Endothelial cell of umbilical vein (primary cell): ENCODE measurements at regions of chr15 and their contacts with region 1.

Region 1: DNA sequence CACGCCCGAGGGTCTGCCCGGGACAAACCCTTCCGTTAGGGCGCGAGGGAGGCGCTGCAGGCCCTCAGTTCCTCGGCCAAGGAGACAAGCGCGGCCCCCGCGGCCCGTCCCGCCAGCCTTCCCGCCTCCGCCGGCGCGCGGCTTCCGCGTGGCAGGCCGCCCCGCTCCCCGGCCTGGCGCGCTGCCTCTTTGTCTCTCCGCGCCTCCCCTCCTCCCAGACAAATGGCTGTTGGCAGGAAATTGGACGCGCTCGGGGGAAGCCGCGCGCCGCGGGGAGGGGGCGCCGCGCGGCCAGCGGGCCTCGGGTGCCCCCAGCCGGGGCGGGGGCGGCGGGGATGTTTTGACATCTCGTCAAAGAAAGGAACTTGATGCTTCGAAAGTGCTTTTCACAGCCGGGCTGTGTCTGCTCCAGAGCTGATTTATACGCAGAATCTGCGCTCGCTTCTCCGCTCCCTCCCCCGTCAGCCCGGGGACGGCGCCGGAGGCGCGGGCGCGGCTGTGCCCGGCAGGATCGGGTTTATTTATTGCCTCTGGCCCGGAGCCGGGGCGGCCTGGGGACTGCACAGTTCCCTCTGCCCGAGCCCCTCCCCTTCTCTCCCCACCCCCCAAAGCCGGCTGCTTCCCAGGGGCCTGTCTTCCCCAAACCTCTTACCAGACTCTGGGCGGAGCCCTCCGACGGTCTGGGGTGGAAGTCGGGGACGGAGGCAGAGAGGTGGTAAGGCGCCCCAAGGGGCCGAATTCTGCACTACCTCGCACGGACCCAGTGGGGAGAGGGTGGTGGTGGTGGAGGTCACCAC is 20.7 kb downstream of the SHF start:
- DNase-seq: peak; percentile 72
- H3K4me3 ChIP-seq: peak overlapping the region; percentile 54 to 76 (median 61)
- H3K27ac ChIP-seq: peak overlapping the region; percentile 79
- H3K4me1 ChIP-seq: peaks cover 3% of the 10 kb centered on the region
- H3K27me3 ChIP-seq: no peaks in the 10 kb centered on the region
- CTCF ChIP-seq: peak; percentile 52 to 74
- POLR2A ChIP-seq: no peak

Region 2: DNA sequence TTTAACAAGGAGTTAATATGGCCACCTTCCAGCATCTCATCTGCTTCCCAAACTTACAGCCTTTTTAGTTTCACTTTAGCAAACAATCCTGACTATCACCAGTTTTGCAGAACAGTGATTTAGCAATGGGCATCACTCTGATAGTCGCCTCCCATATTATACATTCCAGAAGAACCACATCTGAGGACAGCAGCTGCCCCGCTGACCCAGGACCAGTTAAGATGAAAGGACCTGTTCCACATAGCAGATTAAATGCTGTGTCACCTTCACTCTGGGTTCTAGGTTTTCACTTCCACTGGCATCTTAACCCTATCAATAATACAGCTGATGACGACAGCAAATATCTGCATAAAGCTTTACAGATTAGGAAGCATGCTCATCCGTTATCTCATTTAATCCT is 330.9 kb before region 1 on chr15:
- CTCF ChIA-PET with region 1: no interaction called
- POLR2A ChIA-PET with region 1: no interaction called
- dilution Hi-C with region 1: no loop called
- intact Hi-C with region 1: no loop called
- DNase-seq: no peak
- H3K4me3 ChIP-seq: no peak overlapping the region
- H3K27ac ChIP-seq: no peak overlapping the region
- H3K4me1 ChIP-seq: peaks cover 13% of the 10 kb centered on the region
- H3K27me3 ChIP-seq: no peaks in the 10 kb centered on the region
- CTCF ChIP-seq: no peak
- POLR2A ChIP-seq: no peak

Region 3: GRCh38 chr15:45118131-45118588 is 48.9 kb before region 1 on chr15:
- CTCF ChIA-PET with region 1: interaction called, 12 read pairs
- POLR2A ChIA-PET with region 1: no interaction called
- dilution Hi-C with region 1: no loop called
- intact Hi-C with region 1: no loop called
- DNase-seq: peak; percentile 92
- H3K4me3 ChIP-seq: peak overlapping the region in 1 of 3 experiments; percentile 22
- H3K27ac ChIP-seq: no peak overlapping the region
- H3K4me1 ChIP-seq: peaks cover 10% of the 10 kb centered on the region
- H3K27me3 ChIP-seq: peaks cover 46 to 47% of the 10 kb centered on the region in 2 experiments
- CTCF ChIP-seq: peak; percentile 100
- POLR2A ChIP-seq: no peak

Region 4: DNA sequence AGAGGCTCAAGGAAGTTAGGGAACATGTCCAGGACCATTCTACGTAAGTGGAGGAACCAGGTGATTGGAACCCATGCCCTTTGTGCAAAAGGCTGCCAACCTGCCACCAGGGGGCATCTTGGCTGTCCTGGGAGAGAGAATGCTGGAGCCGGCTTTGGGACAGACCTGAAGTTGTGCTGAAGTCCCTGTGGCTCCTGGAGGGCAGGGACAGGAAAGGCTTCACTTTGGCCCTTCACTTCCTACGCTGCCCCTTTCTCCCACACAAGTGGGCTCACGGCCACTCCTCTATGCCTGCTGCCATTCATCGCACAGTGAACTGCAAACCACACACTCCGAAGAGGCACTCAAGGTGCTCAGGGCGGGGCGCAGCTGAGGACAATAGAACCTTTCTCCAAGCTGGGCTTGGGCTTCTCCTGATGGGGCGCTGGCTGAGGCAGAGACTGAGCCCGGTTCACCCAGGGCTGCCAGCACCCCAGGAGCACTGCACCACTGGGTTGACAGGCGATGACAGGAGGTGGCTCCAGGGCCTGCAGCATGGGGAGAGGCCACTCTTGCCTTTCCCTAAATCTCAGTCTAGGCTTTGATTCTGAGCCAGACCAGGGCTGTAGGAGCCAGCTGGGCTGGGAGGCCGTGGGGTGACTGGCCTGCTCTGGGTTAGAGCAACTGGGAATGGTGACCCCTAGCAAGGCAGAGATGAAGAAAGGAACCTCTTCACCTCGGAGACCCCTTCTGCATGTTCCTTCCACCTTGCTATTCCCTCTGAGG is 12.4 kb after region 1 on chr15:
- CTCF ChIA-PET with region 1: interaction called, 24 read pairs
- POLR2A ChIA-PET with region 1: interaction called, 3 read pairs
- dilution Hi-C with region 1: no loop called
- intact Hi-C with region 1: no loop called
- DNase-seq: no peak
- H3K4me3 ChIP-seq: no peak overlapping the region
- H3K27ac ChIP-seq: no peak overlapping the region
- H3K4me1 ChIP-seq: no peaks in the 10 kb centered on the region
- H3K27me3 ChIP-seq: no peaks in the 10 kb centered on the region
- CTCF ChIP-seq: peak; percentile 43 to 63
- POLR2A ChIP-seq: no peak

Region 5: GRCh38 chr15:45205192-45205591 is 38.2 kb after region 1 on chr15:
- CTCF ChIA-PET with region 1: interaction called, 98 read pairs
- POLR2A ChIA-PET with region 1: no interaction called
- dilution Hi-C with region 1: no loop called
- intact Hi-C with region 1: loop called (anchors 1 kb)
- DNase-seq: peak; percentile 33
- H3K4me3 ChIP-seq: no peak overlapping the region
- H3K27ac ChIP-seq: no peak overlapping the region
- H3K4me1 ChIP-seq: peaks cover 3% of the 10 kb centered on the region
- H3K27me3 ChIP-seq: peaks cover 9 to 12% of the 10 kb centered on the region in 2 experiments
- CTCF ChIP-seq: peak; percentile 73 to 88
- POLR2A ChIP-seq: no peak

Region 6: GRCh38 chr15:45402162-45402954 is 235.3 kb after region 1 on chr15:
- CTCF ChIA-PET with region 1: interaction called, 93 read pairs
- POLR2A ChIA-PET with region 1: interaction called, 4 read pairs
- dilution Hi-C with region 1: no loop called
- intact Hi-C with region 1: loop called (anchors 1 kb)
- DNase-seq: peak; percentile 98
- H3K4me3 ChIP-seq: peak overlapping the region; percentile 48 to 85 (median 76)
- H3K27ac ChIP-seq: peak overlapping the region; percentile 21
- H3K4me1 ChIP-seq: peaks cover 10% of the 10 kb centered on the region
- H3K27me3 ChIP-seq: no peaks in the 10 kb centered on the region
- CTCF ChIP-seq: no peak
- POLR2A ChIP-seq: peak; percentile 98

Region 7: GRCh38 chr15:45522328-45523160 is 355.5 kb after region 1 on chr15 and contains the start of gene SLC30A4:
- CTCF ChIA-PET with region 1: no interaction called
- POLR2A ChIA-PET with region 1: no interaction called
- dilution Hi-C with region 1: no loop called
- intact Hi-C with region 1: no loop called
- DNase-seq: peak; percentile 68
- H3K4me3 ChIP-seq: peak within 1 kb of the TSS; percentile 53 to 90 (median 60)
- H3K27ac ChIP-seq: no peak within 1 kb of the TSS
- H3K4me1 ChIP-seq: peaks cover 9% of the 10 kb centered on the region
- H3K27me3 ChIP-seq: peaks cover 0 to 3% of the 10 kb centered on the region in 2 experiments
- CTCF ChIP-seq: peak; percentile 12 to 49
- POLR2A ChIP-seq: no peak
- total RNA-seq, gene SLC30A4: 3.8 and 3.9 TPM in 2 replicates

Region 8: GRCh38 chr15:45611305-45611704 is 444.3 kb after region 1 on chr15:
- CTCF ChIA-PET with region 1: interaction called, 8 read pairs
- POLR2A ChIA-PET with region 1: no interaction called
- dilution Hi-C with region 1: no loop called
- intact Hi-C with region 1: loop called (anchors 1 kb)
- DNase-seq: peak; percentile 33
- H3K4me3 ChIP-seq: no peak overlapping the region
- H3K27ac ChIP-seq: no peak overlapping the region
- H3K4me1 ChIP-seq: peaks cover 8% of the 10 kb centered on the region
- H3K27me3 ChIP-seq: no peaks in the 10 kb centered on the region
- CTCF ChIP-seq: peak; percentile 20 to 24
- POLR2A ChIP-seq: no peak